ENCODE measurements at regions of chr19 and their contacts with region 1.

Region 1: DNA sequence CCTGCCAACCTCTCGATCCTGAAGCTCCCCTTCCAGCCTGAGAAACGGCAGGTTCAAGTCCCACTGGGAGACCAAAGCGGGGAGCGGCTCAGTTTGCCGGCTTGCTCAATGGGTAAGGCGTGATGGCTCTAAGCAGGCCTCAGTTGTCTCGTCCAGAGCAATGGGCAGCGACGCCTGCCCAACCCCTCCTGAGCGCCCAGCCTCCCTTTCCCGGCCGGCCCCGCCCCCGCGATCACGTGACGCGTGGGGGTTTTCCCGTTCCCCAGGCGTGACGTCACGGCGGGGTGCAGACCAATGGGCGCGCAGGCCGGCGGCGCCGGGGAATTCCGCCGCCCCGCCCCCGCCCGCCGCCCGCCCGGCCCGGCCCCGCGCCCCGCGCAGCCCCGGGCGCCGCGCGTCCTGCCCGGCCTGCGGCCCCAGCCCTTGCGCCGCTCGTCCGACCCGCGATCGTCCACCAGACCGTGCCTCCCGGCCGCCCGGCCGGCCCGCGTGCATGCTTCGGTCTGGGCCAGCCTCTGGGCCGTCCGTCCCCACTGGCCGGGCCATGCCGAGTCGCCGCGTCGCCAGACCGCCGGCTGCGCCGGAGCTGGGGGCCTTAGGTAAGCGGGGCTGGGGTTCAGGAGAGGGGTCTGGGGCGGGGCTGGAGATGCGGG is at the start of gene RELB:
- DNase-seq: peak; percentile 96
- ATAC-seq: peak; percentile 48
- H3K4me3 ChIP-seq: peak within 1 kb of the TSS in 4 of 5 experiments; percentile 75 to 95 (median 82)
- H3K4me3 Mint-ChIP-seq: peak within 1 kb of the TSS; percentile 96
- H3K27ac ChIP-seq: peak within 1 kb of the TSS; percentile 100
- H3K27ac Mint-ChIP-seq: peak within 1 kb of the TSS; percentile 97
- H3K4me1 ChIP-seq: peaks cover 13 to 15% of the 10 kb centered on the region in 2 donors
- H3K4me1 Mint-ChIP-seq: peaks cover 32% of the 10 kb centered on the region
- H3K27me3 ChIP-seq: no peaks in the 10 kb centered on the region
- H3K27me3 Mint-ChIP-seq: no peaks in the 10 kb centered on the region
- CTCF ChIP-seq: no peak
- total RNA-seq, gene RELB: 106 and 111 TPM in 2 replicates

Region 2: DNA sequence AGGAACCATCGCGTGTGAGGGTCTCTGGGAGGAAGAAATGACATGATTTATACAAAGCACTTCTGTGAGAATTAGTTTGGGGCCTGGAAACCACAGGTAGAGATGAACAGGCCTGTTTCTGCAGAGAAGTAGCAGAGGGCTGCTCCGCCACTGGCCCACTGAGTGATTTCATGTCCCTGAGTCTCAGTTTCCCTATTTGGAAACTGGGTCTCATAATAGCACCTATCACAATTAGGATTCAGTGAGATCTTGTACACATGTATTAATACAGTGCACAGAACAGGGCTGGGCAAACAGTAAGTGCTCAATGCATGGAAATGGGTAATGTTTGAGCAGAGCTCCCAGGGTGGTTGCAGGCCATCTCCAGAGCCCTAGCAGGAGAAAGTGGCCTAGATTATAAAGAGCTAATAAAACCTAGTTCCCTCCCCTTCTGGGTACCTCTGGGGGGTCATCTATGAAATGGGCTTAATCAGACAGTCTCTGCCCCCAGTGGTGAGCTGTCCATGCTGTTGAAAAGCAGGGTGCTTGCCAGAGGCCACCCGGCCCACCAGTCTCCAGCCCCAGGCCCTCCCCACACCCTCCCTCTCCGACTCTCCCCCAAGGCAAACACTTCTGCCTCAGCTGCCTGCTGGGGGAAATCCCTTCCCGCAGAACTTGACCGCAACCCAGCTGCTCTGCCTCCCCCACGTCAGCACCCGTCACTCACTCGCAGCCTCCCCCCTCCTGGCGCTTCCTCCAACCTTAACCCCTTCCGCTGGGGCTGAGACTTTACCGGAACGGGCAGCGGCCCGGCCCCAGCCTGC is 248.2 kb before region 1 on chr19:
- CTCF ChIA-PET with region 1: no interaction called
- POLR2A ChIA-PET with region 1: no interaction called
- intact Hi-C with region 1: loop called (anchors 5 kb)
- DNase-seq: peak; percentile 97
- ATAC-seq: peak; percentile 69
- H3K4me3 ChIP-seq: peak overlapping the region; percentile 44 to 94 (median 69)
- H3K4me3 Mint-ChIP-seq: peak overlapping the region; percentile 97
- H3K27ac ChIP-seq: peak overlapping the region; percentile 92
- H3K27ac Mint-ChIP-seq: peak overlapping the region; percentile 98
- H3K4me1 ChIP-seq: peaks cover 55 to 69% of the 10 kb centered on the region in 2 donors
- H3K4me1 Mint-ChIP-seq: peaks cover 59% of the 10 kb centered on the region
- H3K27me3 ChIP-seq: no peaks in the 10 kb centered on the region
- H3K27me3 Mint-ChIP-seq: no peaks in the 10 kb centered on the region
- CTCF ChIP-seq: no peak

Region 3: DNA sequence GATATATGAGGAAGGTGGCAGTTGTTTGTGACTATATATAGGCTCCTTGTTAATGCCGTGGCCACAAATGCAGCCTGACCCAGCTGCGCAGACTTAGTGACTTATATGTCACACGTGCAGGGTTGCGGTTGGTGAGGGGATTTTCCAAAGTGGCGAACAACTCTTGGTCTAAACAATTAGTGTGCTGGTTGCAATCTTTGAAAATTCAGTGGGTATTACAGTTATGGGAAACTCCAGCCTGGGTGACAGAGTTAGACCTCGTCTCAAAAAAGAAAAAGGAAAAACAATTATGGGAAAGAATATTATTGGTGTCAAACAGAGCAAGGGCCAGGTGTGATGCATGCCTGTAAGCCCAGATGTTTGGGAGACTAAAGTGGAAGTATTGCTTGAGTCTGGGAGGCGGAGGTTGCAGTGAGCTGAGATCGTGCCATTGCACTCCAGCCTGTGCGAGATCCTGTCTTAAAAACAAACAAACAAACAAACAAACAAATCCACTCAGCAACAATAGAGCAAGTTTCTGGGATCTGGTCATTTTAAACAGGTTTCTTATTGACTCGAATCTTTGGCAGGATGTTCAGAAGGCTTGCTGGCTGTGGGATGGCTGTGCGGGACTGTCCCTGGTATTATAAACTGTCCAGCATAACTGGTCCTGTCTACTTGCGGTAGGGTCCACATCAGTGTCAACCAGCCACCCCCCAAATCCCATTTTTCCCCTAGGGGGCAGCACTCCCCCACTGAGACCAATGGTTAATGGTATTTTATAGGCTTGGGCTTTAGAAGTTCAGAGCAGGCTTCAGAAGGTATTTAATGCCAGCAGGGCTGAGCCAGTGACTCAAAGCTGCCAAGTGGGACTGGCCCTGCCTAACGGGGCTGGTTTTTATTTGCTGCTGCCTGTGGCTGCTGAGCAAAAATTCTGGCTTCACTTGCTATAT is 15.4 kb after region 1 on chr19:
- CTCF ChIA-PET with region 1: interaction called, 4 read pairs
- POLR2A ChIA-PET with region 1: interaction called, 13 read pairs
- intact Hi-C with region 1: loop called (anchors 1 kb)
- DNase-seq: peak; percentile 89
- ATAC-seq: peak; percentile 79
- H3K4me3 ChIP-seq: peak overlapping the region in 2 of 5 experiments; percentile 26 to 33
- H3K4me3 Mint-ChIP-seq: peak overlapping the region; percentile 81
- H3K27ac ChIP-seq: peak overlapping the region; percentile 84 to 93
- H3K27ac Mint-ChIP-seq: peak overlapping the region; percentile 94
- H3K4me1 ChIP-seq: peaks cover 7 to 26% of the 10 kb centered on the region in 2 donors
- H3K4me1 Mint-ChIP-seq: peaks cover 18% of the 10 kb centered on the region
- H3K27me3 ChIP-seq: no peaks in the 10 kb centered on the region
- H3K27me3 Mint-ChIP-seq: no peaks in the 10 kb centered on the region
- CTCF ChIP-seq: peak; percentile 70

Region 4: GRCh38 chr19:45047188-45047797 is 46.1 kb after region 1 on chr19:
- CTCF ChIA-PET with region 1: interaction called, 4 read pairs
- POLR2A ChIA-PET with region 1: interaction called, 18 read pairs
- intact Hi-C with region 1: loop called (anchors 1 kb)
- DNase-seq: peak; percentile 81
- ATAC-seq: peak; percentile 46
- H3K4me3 ChIP-seq: peak overlapping the region; percentile 34 to 71 (median 51)
- H3K4me3 Mint-ChIP-seq: peak overlapping the region; percentile 90
- H3K27ac ChIP-seq: peak overlapping the region; percentile 61 to 78
- H3K27ac Mint-ChIP-seq: peak overlapping the region; percentile 89
- H3K4me1 ChIP-seq: peaks cover 65 to 69% of the 10 kb centered on the region in 2 donors
- H3K4me1 Mint-ChIP-seq: peaks cover 68% of the 10 kb centered on the region
- H3K27me3 ChIP-seq: no peaks in the 10 kb centered on the region
- H3K27me3 Mint-ChIP-seq: no peaks in the 10 kb centered on the region
- CTCF ChIP-seq: peak; percentile 43

Region 5: GRCh38 chr19:45092747-45093678 is 91.8 kb after region 1 on chr19 and contains the start of gene PPP1R37:
- CTCF ChIA-PET with region 1: no interaction called
- POLR2A ChIA-PET with region 1: interaction called, 12 read pairs
- intact Hi-C with region 1: loop called (anchors 1 kb)
- DNase-seq: peak; percentile 97
- ATAC-seq: peak; percentile 67
- H3K4me3 ChIP-seq: peak within 1 kb of the TSS; percentile 79 to 93 (median 91)
- H3K4me3 Mint-ChIP-seq: peak within 1 kb of the TSS; percentile 95
- H3K27ac ChIP-seq: peak within 1 kb of the TSS; percentile 81 to 98
- H3K27ac Mint-ChIP-seq: peak within 1 kb of the TSS; percentile 99
- H3K4me1 ChIP-seq: peaks cover 22 to 44% of the 10 kb centered on the region in 2 donors
- H3K4me1 Mint-ChIP-seq: peaks cover 62% of the 10 kb centered on the region
- H3K27me3 ChIP-seq: no peaks in the 10 kb centered on the region
- H3K27me3 Mint-ChIP-seq: no peaks in the 10 kb centered on the region
- CTCF ChIP-seq: peak; percentile 52
- total RNA-seq, gene PPP1R37: 28.1 and 37.3 TPM in 2 replicates

Measured in B cell (primary cell).